PC-9 (cell line): ENCODE measurements at regions of chr17 and their contacts with region 1.

Region 1: GRCh38 chr17:74176546-74177001 is 26.9 kb upstream of the RPL38 start:
- DNase-seq: peak; percentile 43 to 60
- H3K4me3 ChIP-seq: no peak overlapping the region
- H3K27ac ChIP-seq: no peak overlapping the region
- H3K4me1 ChIP-seq: no peaks in the 10 kb centered on the region
- H3K27me3 ChIP-seq: peaks cover 91% of the 10 kb centered on the region
- CTCF ChIP-seq: peak; percentile 87

Region 2: DNA sequence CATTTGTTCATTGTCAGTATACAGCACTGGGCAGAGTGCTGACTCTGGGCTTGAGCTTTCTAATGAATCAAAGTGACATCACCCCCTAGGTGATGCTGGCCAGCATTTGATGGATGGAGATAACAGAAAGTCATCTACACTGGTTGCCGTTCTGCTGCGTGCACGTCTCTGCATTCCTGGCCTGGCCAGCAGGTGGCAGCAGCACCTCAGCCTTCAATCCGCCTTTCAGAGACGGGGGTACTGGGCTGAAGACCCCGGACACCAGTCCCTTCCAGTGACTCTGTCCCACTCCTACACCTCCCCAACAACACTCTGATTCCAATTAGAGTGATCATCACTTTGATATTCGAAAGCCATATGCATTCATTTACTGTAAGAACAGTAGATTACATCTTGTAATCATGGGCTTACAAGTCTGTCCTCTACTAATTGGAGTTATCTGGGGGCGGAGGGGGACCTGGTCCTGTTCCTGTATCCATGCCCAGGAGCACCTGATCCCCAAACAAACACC is 920.8 kb before region 1 on chr17:
- CTCF ChIA-PET with region 1: no interaction called
- POLR2A ChIA-PET with region 1: no interaction called
- intact Hi-C with region 1: loop called (anchors 10 kb)
- DNase-seq: peak; percentile 51 to 63
- H3K4me3 ChIP-seq: no peak overlapping the region
- H3K27ac ChIP-seq: no peak overlapping the region
- H3K4me1 ChIP-seq: no peaks in the 10 kb centered on the region
- H3K27me3 ChIP-seq: no peaks in the 10 kb centered on the region
- CTCF ChIP-seq: peak; percentile 99

Region 3: GRCh38 chr17:73371285-73371684 is 805.3 kb before region 1 on chr17:
- CTCF ChIA-PET with region 1: no interaction called
- POLR2A ChIA-PET with region 1: no interaction called
- intact Hi-C with region 1: loop called (anchors 2 kb)
- DNase-seq: no peak
- H3K4me3 ChIP-seq: no peak overlapping the region
- H3K27ac ChIP-seq: no peak overlapping the region
- H3K4me1 ChIP-seq: no peaks in the 10 kb centered on the region
- H3K27me3 ChIP-seq: peaks cover 32% of the 10 kb centered on the region
- CTCF ChIP-seq: no peak

Region 4: GRCh38 chr17:73429440-73430164 is 747.0 kb before region 1 on chr17:
- CTCF ChIA-PET with region 1: interaction called, 3 read pairs
- POLR2A ChIA-PET with region 1: no interaction called
- intact Hi-C with region 1: loop called (anchors 1 kb)
- DNase-seq: peak; percentile 47 to 72
- H3K4me3 ChIP-seq: no peak overlapping the region
- H3K27ac ChIP-seq: no peak overlapping the region
- H3K4me1 ChIP-seq: no peaks in the 10 kb centered on the region
- H3K27me3 ChIP-seq: peaks cover 94% of the 10 kb centered on the region
- CTCF ChIP-seq: peak; percentile 98

Region 5: GRCh38 chr17:74089869-74090464 is 86.6 kb before region 1 on chr17:
- CTCF ChIA-PET with region 1: no interaction called
- POLR2A ChIA-PET with region 1: no interaction called
- intact Hi-C with region 1: loop called (anchors 1 kb)
- DNase-seq: peak; percentile 38 to 43
- H3K4me3 ChIP-seq: no peak overlapping the region
- H3K27ac ChIP-seq: no peak overlapping the region
- H3K4me1 ChIP-seq: no peaks in the 10 kb centered on the region
- H3K27me3 ChIP-seq: peaks cover 72% of the 10 kb centered on the region
- CTCF ChIP-seq: peak; percentile 74

Region 6: GRCh38 chr17:74203439-74204240 is 27.1 kb after region 1 on chr17 and contains the start of gene RPL38:
- CTCF ChIA-PET with region 1: no interaction called
- POLR2A ChIA-PET with region 1: no interaction called
- intact Hi-C with region 1: no loop called
- DNase-seq: peak; percentile 90 to 91
- H3K4me3 ChIP-seq: peak within 1 kb of the TSS; percentile 93
- H3K27ac ChIP-seq: peak within 1 kb of the TSS; percentile 80
- H3K4me1 ChIP-seq: peaks cover 17% of the 10 kb centered on the region
- H3K27me3 ChIP-seq: peaks cover 46% of the 10 kb centered on the region
- CTCF ChIP-seq: peak; percentile 89
- total RNA-seq, gene RPL38: 761 and 961 TPM in 2 replicates

Region 7: GRCh38 chr17:74316220-74316619 is 139.6 kb after region 1 on chr17:
- CTCF ChIA-PET with region 1: no interaction called
- POLR2A ChIA-PET with region 1: no interaction called
- intact Hi-C with region 1: no loop called
- DNase-seq: no peak
- H3K4me3 ChIP-seq: no peak overlapping the region
- H3K27ac ChIP-seq: no peak overlapping the region
- H3K4me1 ChIP-seq: no peaks in the 10 kb centered on the region
- H3K27me3 ChIP-seq: peaks cover 92% of the 10 kb centered on the region
- CTCF ChIP-seq: no peak

Region 8: GRCh38 chr17:74330446-74330845 is 153.9 kb after region 1 on chr17:
- CTCF ChIA-PET with region 1: no interaction called
- POLR2A ChIA-PET with region 1: no interaction called
- intact Hi-C with region 1: no loop called
- DNase-seq: no peak
- H3K4me3 ChIP-seq: no peak overlapping the region
- H3K27ac ChIP-seq: no peak overlapping the region
- H3K4me1 ChIP-seq: no peaks in the 10 kb centered on the region
- H3K27me3 ChIP-seq: peaks cover 57% of the 10 kb centered on the region
- CTCF ChIP-seq: no peak